Prostate gland (tissue), 2 donors: ENCODE measurements at regions of chr7 and their contacts with region 1.

Region 1: DNA sequence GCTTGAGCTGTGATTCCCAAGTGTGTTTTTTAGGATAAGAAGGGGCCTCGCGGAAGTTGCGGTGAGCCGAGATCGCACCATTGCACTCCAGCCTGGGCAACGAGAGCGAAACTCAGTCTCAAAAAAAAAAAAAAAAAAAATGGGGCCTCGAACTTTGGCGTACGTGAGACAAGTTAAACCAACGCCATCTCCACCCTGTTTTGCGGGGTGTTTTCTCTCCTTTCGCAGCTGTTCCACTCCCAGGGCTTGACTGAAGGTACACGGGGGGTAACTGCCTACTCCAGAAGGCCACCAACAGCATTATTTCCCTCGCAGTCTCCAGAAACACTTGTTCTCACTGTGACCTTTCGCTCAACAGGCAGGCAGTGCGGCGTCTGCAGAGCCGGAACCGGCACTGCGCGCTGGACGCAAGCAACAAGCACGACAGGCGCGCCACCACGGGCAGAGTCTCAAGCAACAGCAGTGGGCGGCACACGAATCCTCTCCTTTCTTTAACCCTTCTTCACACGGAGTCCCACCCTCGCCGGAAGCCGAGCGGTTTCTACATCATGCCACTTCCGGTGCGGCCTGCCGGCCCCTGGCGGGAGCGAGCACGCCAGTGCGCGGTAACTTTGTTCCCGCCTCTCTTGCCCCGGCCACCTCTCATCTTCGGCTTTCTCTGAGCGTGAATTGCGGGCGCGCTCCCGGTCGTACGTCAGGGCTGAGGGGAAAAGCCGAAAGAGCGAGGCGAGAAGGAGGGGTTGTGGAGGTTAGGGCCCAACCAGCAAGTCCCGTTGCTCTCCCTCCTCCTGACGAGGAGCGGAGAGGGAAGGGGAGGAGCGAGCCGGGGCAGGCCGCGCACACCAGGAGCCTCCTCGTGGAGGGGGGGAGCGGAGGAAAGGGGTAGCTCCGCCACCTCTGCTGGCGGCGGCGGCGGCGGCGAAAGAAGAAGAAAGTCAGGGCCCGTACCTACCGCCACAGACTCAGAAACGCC is 814 bp upstream of the CDK13 start:
- DNase-seq: peak; percentile 98
- H3K4me3 ChIP-seq: peak overlapping the region; percentile 88 to 90
- H3K27ac ChIP-seq: peak overlapping the region; percentile 99
- H3K4me1 ChIP-seq: no peaks in the 10 kb centered on the region
- H3K27me3 ChIP-seq: no peaks in the 10 kb centered on the region
- CTCF ChIP-seq: peak in 2 of 4 experiments; percentile 25 to 42
- POLR2A ChIP-seq: peak; percentile 86

Region 2: DNA sequence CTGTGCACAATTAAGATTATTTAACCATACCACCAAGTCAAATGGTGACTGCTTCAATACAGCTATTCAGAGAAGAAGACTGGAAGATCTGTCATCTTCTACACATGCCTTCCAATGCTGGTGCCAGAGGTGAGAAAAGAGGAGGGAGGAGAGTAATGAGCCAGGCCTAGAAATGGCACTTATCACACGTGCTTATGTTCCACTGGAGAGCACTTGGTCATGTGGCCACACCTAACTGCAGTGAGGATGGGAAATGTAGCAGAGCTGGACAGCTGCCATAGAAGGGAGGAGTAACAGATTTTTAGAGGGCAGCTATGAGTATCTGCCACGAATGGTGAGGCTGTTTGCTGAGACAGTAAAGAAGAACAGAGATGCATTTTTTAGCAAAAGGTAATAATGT is 108.0 kb after region 1 on chr7:
- intact Hi-C with region 1: loop called (anchors 2 kb)
- DNase-seq: no peak
- H3K4me3 ChIP-seq: no peak overlapping the region
- H3K27ac ChIP-seq: no peak overlapping the region
- H3K4me1 ChIP-seq: no peaks in the 10 kb centered on the region
- H3K27me3 ChIP-seq: no peaks in the 10 kb centered on the region
- CTCF ChIP-seq: no peak
- POLR2A ChIP-seq: no peak

Region 3: GRCh38 chr7:40134428-40135316 is 185.4 kb after region 1 on chr7 and contains the starts of genes MPLKIP and SUGCT:
- intact Hi-C with region 1: loop called (anchors 2 kb)
- DNase-seq: peak; percentile 76
- H3K4me3 ChIP-seq: peak within 1 kb of the TSS; percentile 65 to 81
- H3K27ac ChIP-seq: peak within 1 kb of the TSS; percentile 88 to 94
- H3K4me1 ChIP-seq: peaks cover 10% of the 10 kb centered on the region
- H3K27me3 ChIP-seq: no peaks in the 10 kb centered on the region
- CTCF ChIP-seq: peak; percentile 95 to 97 (median 96)
- POLR2A ChIP-seq: peak; percentile 11
- total RNA-seq, gene MPLKIP: 56.7 to 67.3 TPM
- total RNA-seq, gene SUGCT: 2.2 to 3.2 TPM